Uterus (tissue), 4 donors: ENCODE measurements at regions of chr9 and their contacts with region 1.

Region 1: DNA sequence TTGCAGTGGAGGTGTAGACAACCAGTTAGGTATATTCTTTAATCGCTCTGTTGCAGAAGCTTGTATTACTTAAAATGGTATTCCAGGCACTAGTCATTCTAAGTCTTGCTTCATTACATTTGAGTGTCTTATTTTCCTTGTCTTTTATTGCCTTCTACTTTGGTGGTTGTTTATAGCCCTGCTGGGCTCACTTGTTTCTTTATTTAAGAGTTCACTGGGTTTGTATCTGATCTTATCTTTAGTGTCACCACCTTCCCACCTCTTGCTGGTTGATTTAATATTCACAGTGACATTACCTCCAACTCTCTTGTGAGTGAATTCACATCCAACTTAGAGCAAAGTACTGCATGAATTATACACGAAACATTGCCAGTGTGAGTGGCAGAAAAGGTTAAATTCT is 83.6 kb upstream of the BNC2 start:
- DNase-seq: no peak
- H3K4me3 ChIP-seq: no peak overlapping the region
- H3K27ac ChIP-seq: no peak overlapping the region
- H3K4me1 ChIP-seq: no peaks in the 10 kb centered on the region
- H3K27me3 ChIP-seq: no peaks in the 10 kb centered on the region
- CTCF ChIP-seq: no peak
- POLR2A ChIP-seq: no peak

Region 2: DNA sequence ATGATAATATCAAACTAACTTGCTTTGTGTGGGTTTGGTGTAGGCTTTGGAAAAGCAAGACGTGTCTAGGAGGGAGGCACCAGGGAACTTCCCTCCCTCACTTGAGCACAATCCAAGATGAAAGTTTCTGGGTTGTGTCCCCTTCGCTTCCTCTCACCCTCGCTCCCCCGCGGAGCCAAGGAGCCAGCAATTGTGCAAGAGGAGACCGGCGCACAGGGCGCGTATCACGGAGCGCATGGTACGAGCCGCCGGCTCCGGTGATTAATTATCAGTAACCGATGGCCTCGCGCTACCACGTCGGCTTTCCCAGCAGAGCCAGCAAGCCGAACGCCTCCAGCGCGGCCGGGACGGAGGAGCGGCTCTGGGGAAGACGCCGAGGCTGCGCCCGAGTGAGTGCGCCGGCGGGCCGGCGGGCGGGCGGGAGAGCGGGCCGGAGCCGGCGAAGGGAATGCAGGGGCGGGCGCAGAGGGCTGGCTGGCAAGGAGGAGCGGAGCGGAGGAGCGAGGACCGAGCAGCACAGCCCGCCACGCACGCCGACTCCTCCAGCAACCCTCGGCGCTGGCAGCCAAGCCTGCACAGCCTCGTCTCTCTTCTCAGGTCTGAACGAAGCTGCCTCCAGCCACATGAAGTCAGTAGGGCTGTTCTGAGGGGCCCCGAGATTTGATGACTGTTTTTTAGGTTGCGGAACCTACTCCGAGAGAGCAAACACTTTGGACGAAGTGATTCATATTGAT is 227.2 kb before region 1 on chr9:
- intact Hi-C with region 1: no loop called
- DNase-seq: peak; percentile 87 to 88
- H3K4me3 ChIP-seq: peak overlapping the region; percentile 39 to 70
- H3K27ac ChIP-seq: peak overlapping the region; percentile 96
- H3K4me1 ChIP-seq: peaks cover 0 to 11% of the 10 kb centered on the region in 2 donors
- H3K27me3 ChIP-seq: no peaks in the 10 kb centered on the region
- CTCF ChIP-seq: no peak
- POLR2A ChIP-seq: peak in 1 of 2 donors; percentile 69

Region 3: DNA sequence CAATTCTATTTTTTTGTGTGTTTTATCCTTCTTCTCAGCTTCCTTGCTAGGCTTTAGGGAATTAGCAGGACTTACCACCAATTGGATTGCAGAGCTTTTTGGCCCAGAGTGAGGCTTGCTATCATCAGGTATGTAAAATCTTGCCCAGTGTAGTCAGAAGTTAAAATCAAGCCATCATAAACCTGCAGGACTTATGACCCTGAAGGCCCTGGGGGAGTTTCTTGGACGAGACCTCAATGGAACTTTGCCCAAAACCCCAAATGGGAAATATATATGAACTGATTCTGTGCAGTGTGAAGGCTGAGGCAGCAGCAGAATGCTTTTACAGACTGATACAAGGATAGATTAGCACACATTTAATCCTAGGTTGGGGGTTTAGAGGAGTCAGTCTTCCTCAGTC is 911.8 kb after region 1 on chr9:
- intact Hi-C with region 1: loop called (anchors 5 kb)
- DNase-seq: no peak
- H3K4me3 ChIP-seq: no peak overlapping the region
- H3K27ac ChIP-seq: no peak overlapping the region
- H3K4me1 ChIP-seq: no peaks in the 10 kb centered on the region
- H3K27me3 ChIP-seq: no peaks in the 10 kb centered on the region
- CTCF ChIP-seq: no peak
- POLR2A ChIP-seq: no peak